H1 (cell line): ENCODE measurements at regions of chr16 and their contacts with region 1.

Region 1: GRCh38 chr16:49183911-49184310 is 97.7 kb downstream of the CBLN1 start:
- DNase-seq: peak; percentile 7 to 85
- H3K4me3 ChIP-seq: no peak overlapping the region
- H3K27ac ChIP-seq: no peak overlapping the region
- H3K4me1 ChIP-seq: peaks cover 0 to 4% (median 2%) of the 10 kb centered on the region in 4 experiments; a peak in 1 of 7 replicates
- H3K27me3 ChIP-seq: no peaks in the 10 kb centered on the region
- CTCF ChIP-seq: peak; percentile 68 to 80 (median 77)
- EP300 ChIP-seq: no peak
- POLR2A ChIP-seq: no peak
- RAD21 ChIP-seq: peak; percentile 79 to 87

Region 2: GRCh38 chr16:49168126-49168525 is 15.8 kb before region 1 on chr16:
- CTCF ChIA-PET with region 1: interaction called, 10 read pairs
- POLR2A ChIA-PET with region 1: interaction called, 3 read pairs
- DNase-seq: no peak
- H3K4me3 ChIP-seq: no peak overlapping the region
- H3K27ac ChIP-seq: no peak overlapping the region
- H3K4me1 ChIP-seq: peaks cover 0 to 2% (median 0%) of the 10 kb centered on the region in 4 experiments; a peak in 1 of 7 replicates
- H3K27me3 ChIP-seq: no peaks in the 10 kb centered on the region
- CTCF ChIP-seq: no peak
- EP300 ChIP-seq: no peak
- POLR2A ChIP-seq: no peak
- RAD21 ChIP-seq: no peak

Region 3: DNA sequence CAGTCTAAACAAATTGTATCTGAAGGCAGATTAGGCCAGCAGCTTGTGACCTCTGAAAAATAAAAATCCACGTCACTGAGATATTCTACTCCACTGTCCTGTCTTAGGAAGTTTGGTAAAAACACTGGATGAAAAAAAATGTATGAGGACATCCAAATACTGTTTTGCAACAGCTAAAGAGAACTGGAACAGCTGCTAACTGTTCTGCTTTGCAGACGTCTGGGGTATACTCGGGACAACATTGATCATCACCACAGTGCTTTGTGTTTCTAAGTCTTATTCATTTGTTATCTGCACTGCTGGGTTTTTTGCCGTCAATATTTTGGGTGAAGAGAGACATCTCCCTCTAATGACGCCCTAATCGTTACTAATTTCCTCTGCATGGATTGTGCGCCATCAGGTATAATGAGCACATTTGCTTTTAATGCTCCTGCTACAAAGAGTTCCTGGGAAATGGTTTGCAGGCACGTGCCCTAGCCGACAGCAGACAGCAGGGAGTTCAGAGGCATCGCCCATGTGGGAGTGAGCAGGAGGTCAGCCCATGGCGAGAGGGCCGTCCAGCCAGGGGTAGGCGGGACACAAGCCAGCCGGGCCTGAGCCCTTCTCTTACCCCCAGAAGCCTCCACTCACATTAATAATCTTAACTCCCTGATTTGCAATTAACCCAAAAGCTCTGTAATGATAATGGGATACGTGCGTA is 10.8 kb after region 1 on chr16:
- CTCF ChIA-PET with region 1: interaction called, 15 read pairs
- POLR2A ChIA-PET with region 1: no interaction called
- DNase-seq: no peak
- H3K4me3 ChIP-seq: no peak overlapping the region
- H3K27ac ChIP-seq: no peak overlapping the region
- H3K4me1 ChIP-seq: no peaks in the 10 kb centered on the region
- H3K27me3 ChIP-seq: no peaks in the 10 kb centered on the region
- CTCF ChIP-seq: no peak
- EP300 ChIP-seq: no peak
- POLR2A ChIP-seq: no peak
- RAD21 ChIP-seq: no peak

Region 4: DNA sequence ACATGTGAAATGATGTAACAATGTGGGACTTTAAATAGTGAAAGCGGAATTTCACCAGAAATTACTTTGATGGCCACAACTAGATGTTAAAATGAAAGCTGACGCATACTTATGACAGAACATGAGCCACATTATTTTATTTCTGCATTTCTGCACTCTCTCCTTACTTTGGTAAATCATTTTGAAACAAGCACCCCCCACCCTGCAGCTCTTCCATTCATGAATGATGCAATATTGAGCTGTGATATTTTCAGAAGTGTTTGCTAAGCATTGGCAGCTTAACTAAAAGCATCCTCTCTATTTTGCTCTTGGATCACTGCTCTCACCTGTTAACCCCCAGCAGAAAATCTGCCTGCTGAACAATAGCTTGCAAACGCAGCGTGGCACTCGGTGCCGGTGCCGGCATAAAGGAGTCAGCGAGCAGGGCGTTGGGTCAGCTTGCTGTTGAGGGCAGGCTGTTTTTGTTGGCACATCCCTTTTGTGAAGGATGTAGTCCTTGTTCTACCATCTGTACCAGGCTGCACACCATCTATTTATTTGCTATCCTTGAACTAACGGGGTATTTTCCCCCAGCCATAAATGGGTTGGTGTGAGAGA is 128.6 kb after region 1 on chr16:
- CTCF ChIA-PET with region 1: no interaction called
- POLR2A ChIA-PET with region 1: no interaction called
- DNase-seq: no peak
- H3K4me3 ChIP-seq: peak overlapping the region in 1 of 4 experiments; percentile 31; a peak in 1 of 8 replicates
- H3K27ac ChIP-seq: no peak overlapping the region
- H3K4me1 ChIP-seq: peaks cover 0 to 7% (median 2%) of the 10 kb centered on the region in 4 experiments; a peak in 3 of 7 replicates
- H3K27me3 ChIP-seq: no peaks in the 10 kb centered on the region; a peak in 1 of 7 replicates
- CTCF ChIP-seq: no peak
- EP300 ChIP-seq: no peak
- POLR2A ChIP-seq: no peak
- RAD21 ChIP-seq: no peak